ENCODE measurements at regions of chr12 and their contacts with region 1.

Region 1: GRCh38 chr12:58443273-58443980 is 476.9 kb downstream of the LRIG3 start:
- DNase-seq: no peak

Region 2: GRCh38 chr12:58346032-58346632 is 97.3 kb before region 1 on chr12:
- intact Hi-C with region 1: loop called (anchors 5 kb)
- DNase-seq: no peak

Measured in cardiac septum (tissue), 1 donor.